SK-N-SH (cell line): ENCODE measurements at regions of chr16 and their contacts with region 1.

Region 1: GRCh38 chr16:14529010-14529669 is 100.9 kb downstream of the PARN start:
- DNase-seq: peak; percentile 61
- H3K4me3 ChIP-seq: no peak overlapping the region; a peak in 1 of 4 replicates
- H3K27ac ChIP-seq: peak overlapping the region in 1 of 2 experiments; percentile 50; a peak in 1 of 4 replicates
- H3K4me1 ChIP-seq: peaks cover 2 to 6% of the 10 kb centered on the region in 2 experiments; a peak in 3 of 4 replicates
- H3K27me3 ChIP-seq: no peaks in the 10 kb centered on the region
- CTCF ChIP-seq: peak; percentile 86
- EP300 ChIP-seq: no peak
- RAD21 ChIP-seq: peak; percentile 99

Region 2: DNA sequence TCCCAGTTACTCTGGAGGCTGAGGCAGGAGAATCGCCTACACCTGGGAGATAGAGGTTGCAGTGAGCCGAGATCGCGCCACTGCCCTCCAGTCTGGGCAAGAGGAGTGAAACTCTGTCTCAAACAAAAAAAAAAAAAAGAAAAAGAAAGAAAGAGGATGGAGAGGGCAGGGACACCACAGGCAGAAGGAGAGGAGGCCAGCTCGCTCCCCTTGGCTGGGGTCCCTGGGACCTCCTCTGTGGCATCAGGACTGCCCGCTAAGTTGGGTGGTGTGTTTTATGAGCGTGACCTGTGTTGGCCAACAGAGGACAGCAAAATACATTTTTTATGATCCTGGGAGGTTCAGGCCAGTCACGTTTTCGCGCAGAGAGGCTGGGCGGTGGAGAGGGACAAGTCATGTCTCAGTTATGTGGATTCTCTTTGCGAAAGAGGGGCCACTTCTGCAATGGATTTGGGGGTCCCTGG is 228.4 kb before region 1 on chr16:
- CTCF ChIA-PET with region 1: interaction called, 37 read pairs
- POLR2A ChIA-PET with region 1: no interaction called
- DNase-seq: peak; percentile 85
- H3K4me3 ChIP-seq: peak overlapping the region in 1 of 2 experiments; percentile 66; a peak in 3 of 4 replicates
- H3K27ac ChIP-seq: no peak overlapping the region; a peak in 1 of 4 replicates
- H3K4me1 ChIP-seq: peaks cover 6 to 9% of the 10 kb centered on the region in 2 experiments; a peak in 3 of 4 replicates
- H3K27me3 ChIP-seq: no peaks in the 10 kb centered on the region
- CTCF ChIP-seq: peak; percentile 77
- EP300 ChIP-seq: no peak
- RAD21 ChIP-seq: peak; percentile 95

Region 3: GRCh38 chr16:14505846-14506245 is 23.3 kb before region 1 on chr16:
- CTCF ChIA-PET with region 1: interaction called, 10 read pairs
- POLR2A ChIA-PET with region 1: no interaction called
- DNase-seq: peak; percentile 37
- H3K4me3 ChIP-seq: no peak overlapping the region
- H3K27ac ChIP-seq: peak overlapping the region in 1 of 2 experiments; percentile 58; a peak in 3 of 4 replicates
- H3K4me1 ChIP-seq: peaks cover 23 to 34% of the 10 kb centered on the region in 2 experiments
- H3K27me3 ChIP-seq: no peaks in the 10 kb centered on the region
- CTCF ChIP-seq: no peak
- EP300 ChIP-seq: 0 out of 4 replicates have a peak, but pooled peaks of 1 of the 2 experiments have one; percentile 15
- RAD21 ChIP-seq: no peak

Region 4: GRCh38 chr16:14562691-14563491 is 33.8 kb after region 1 on chr16:
- CTCF ChIA-PET with region 1: no interaction called
- POLR2A ChIA-PET with region 1: no interaction called
- DNase-seq: no peak
- H3K4me3 ChIP-seq: no peak overlapping the region
- H3K27ac ChIP-seq: no peak overlapping the region
- H3K4me1 ChIP-seq: peaks cover 3 to 9% of the 10 kb centered on the region in 2 experiments; a peak in 2 of 4 replicates
- H3K27me3 ChIP-seq: no peaks in the 10 kb centered on the region
- CTCF ChIP-seq: no peak
- EP300 ChIP-seq: no peak
- RAD21 ChIP-seq: no peak